Activated naive CD4-positive, alpha-beta T cell treated with anti-CD3 and anti-CD28 coated beads, Interleukin-2, amount 10 ng/mL, durations not matched to agents 7 days and 5 days (primary cell): ENCODE measurements at regions of chr20 and their contacts with region 1.

Region 1: DNA sequence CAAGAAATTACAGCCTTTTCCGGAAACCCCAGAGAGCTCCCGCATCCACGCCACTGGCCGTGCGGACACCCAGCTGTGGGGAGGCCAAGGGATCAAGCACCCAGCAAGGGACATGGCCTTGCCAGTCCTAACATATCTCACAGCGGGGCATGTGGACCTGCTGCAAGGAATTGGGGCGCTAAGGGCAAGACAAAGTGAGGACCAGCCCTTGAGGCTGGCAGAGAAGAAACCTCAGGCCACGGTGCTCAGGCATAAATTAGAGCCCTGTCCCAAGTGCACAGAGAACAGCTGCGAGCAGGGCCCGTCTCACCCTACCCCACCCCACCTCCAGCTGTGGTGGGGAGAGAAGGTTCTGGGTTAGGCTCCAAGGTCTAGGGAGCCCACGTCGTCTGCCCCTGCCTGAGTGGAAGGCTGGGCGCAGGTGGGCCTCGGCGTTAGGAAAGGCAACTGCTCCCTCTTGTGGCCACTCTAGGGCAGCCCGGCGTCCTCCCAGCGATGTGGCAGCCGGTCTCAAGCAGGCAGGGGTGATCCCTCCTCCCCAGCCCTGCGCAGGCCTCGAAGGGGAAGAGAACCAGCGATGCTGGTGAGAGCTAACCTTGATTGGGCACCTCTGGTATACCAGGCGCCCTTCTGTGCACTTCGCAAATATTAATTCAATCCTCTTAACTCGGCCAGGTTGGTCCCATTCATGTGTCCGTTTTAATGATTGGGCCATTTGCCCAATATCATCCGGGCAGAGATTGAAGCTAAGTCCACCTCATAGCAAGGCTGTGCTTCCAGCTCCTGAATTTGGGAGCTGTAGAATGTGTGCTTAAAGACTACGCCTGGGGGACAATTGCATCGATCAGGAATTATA is 235.8 kb downstream of the NFATC2 start:
- DNase-seq: peak; percentile 80
- H3K4me3 Mint-ChIP-seq: no peak overlapping the region
- H3K27ac Mint-ChIP-seq: no peak overlapping the region
- H3K4me1 Mint-ChIP-seq: no peaks in the 10 kb centered on the region
- H3K27me3 Mint-ChIP-seq: peaks cover 30% of the 10 kb centered on the region

Region 2: GRCh38 chr20:50980851-50981713 is 325.6 kb before region 1 on chr20:
- CTCF ChIA-PET with region 1: interaction called, 151 read pairs
- DNase-seq: peak; percentile 76
- H3K4me3 Mint-ChIP-seq: no peak overlapping the region
- H3K27ac Mint-ChIP-seq: no peak overlapping the region
- H3K4me1 Mint-ChIP-seq: peaks cover 2% of the 10 kb centered on the region
- H3K27me3 Mint-ChIP-seq: peaks cover 60% of the 10 kb centered on the region

Region 3: GRCh38 chr20:50987592-50988210 is 319.0 kb before region 1 on chr20:
- CTCF ChIA-PET with region 1: interaction called, 151 read pairs
- DNase-seq: peak; percentile 71
- H3K4me3 Mint-ChIP-seq: no peak overlapping the region
- H3K27ac Mint-ChIP-seq: no peak overlapping the region
- H3K4me1 Mint-ChIP-seq: no peaks in the 10 kb centered on the region
- H3K27me3 Mint-ChIP-seq: peaks cover 50% of the 10 kb centered on the region

Region 4: GRCh38 chr20:50992733-50993457 is 313.8 kb before region 1 on chr20:
- CTCF ChIA-PET with region 1: interaction called, 151 read pairs
- DNase-seq: peak; percentile 60
- H3K4me3 Mint-ChIP-seq: no peak overlapping the region
- H3K27ac Mint-ChIP-seq: no peak overlapping the region
- H3K4me1 Mint-ChIP-seq: no peaks in the 10 kb centered on the region
- H3K27me3 Mint-ChIP-seq: peaks cover 38% of the 10 kb centered on the region

Region 5: GRCh38 chr20:51014797-51015722 is 291.7 kb before region 1 on chr20:
- CTCF ChIA-PET with region 1: interaction called, 17 read pairs
- DNase-seq: peak; percentile 42
- H3K4me3 Mint-ChIP-seq: no peak overlapping the region
- H3K27ac Mint-ChIP-seq: no peak overlapping the region
- H3K4me1 Mint-ChIP-seq: no peaks in the 10 kb centered on the region
- H3K27me3 Mint-ChIP-seq: peaks cover 66% of the 10 kb centered on the region

Region 6: GRCh38 chr20:51326201-51326819 is 19.6 kb after region 1 on chr20:
- CTCF ChIA-PET with region 1: interaction called, 12 read pairs
- DNase-seq: peak; percentile 49
- H3K4me3 Mint-ChIP-seq: no peak overlapping the region
- H3K27ac Mint-ChIP-seq: no peak overlapping the region
- H3K4me1 Mint-ChIP-seq: no peaks in the 10 kb centered on the region
- H3K27me3 Mint-ChIP-seq: peaks cover 17% of the 10 kb centered on the region